ENCODE measurements at regions of chr22 and their contacts with region 1.

Region 1: DNA sequence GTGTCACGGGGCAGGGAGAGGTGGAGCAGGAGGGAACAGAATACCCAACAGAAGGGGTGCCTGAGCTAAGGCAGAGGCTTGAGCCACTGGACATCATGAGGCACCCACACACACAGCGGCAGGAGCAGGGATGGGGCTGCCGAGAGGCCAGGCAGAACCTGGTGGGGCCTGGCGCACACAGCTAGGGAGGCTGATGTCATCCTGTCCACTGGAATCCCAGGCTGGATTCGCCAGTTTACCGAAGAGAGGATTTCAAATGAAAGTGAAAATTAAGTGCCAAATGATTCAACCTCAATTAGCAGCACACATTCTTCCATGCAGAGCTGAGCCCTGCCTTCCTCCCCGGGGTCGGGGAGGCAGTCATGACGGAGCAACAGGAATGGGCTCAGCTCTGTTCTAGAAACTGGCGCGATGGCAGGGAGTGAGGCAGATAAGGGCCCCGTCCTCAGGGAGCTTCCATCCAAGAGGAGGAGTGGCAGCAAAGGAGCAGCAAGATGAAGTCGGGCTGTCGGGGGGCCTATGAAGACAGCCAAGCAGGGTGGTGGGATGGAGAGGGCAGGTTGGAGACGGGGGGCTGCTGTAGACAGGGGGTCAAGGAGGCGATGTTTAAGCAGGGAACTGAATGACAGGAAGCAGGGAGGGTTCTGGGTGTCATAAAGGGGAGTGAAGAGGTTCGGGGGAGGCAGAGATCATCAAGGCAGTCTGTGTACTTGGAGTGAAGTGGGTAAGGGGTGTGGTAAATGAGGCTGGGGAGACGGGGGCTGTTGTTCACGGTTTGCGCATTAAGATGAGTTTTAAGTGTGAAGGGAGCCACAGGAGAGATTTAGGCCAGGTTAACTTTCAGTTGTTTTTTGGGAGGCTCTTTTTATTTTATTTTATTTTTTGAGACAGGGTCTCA is 6.4 kb downstream of the RAC2 start:
- DNase-seq: peak in 6 of 9 experiments; percentile 23 to 70 (median 52)
- ATAC-seq: peak; percentile 20
- H3K4me3 ChIP-seq: peak overlapping the region; percentile 39 to 50
- H3K4me3 Mint-ChIP-seq: peak overlapping the region; percentile 82
- H3K27ac ChIP-seq: peak overlapping the region; percentile 59 to 81
- H3K27ac Mint-ChIP-seq: peak overlapping the region; percentile 100
- H3K4me1 ChIP-seq: peaks cover 97% of the 10 kb centered on the region
- H3K4me1 Mint-ChIP-seq: peaks cover 98% of the 10 kb centered on the region
- H3K27me3 ChIP-seq: no peaks in the 10 kb centered on the region
- H3K27me3 Mint-ChIP-seq: no peaks in the 10 kb centered on the region
- CTCF ChIP-seq: no peak

Region 2: DNA sequence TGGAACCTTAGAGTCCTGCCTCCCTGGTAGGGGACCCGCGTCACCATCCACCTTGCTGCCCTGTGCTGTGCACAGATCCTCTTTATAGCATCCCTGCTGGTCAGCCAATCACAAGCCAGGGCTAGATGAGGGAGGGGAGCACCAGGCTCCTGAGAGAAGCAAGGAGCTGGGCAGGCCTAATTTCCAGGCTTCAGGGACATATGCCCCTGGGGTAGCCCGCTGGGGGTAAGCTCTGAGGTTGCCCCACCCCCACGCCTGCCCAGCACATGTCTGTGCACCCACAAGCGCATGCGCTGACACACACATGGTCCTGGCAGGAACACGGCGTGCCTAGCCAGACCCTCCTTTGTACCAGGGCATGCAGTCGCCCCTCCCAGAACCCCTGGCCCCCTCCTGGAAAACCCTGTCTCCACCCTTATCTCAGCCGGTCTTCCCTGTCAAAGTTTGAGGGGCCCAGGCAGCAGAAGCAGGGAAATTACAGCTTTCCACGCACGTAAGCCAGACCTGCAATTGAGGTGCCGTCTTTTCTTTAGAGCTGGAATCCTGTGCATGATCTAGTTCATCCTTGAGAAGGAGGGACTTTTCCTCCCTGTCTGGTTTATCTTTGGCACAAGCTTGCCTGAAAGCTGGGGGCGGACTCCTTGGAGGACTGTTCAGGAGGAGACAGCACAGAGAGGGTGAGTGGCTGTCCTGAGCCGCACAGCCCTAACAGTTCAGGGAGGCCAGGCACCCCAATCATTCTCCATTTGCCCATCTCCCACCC is 27.4 kb before region 1 on chr22:
- CTCF ChIA-PET with region 1: interaction called, 7 read pairs
- POLR2A ChIA-PET with region 1: interaction called, 13 read pairs
- intact Hi-C with region 1: no loop called
- DNase-seq: peak in 3 of 9 experiments; percentile 3 to 48 (median 6)
- ATAC-seq: no peak
- H3K4me3 ChIP-seq: no peak overlapping the region
- H3K4me3 Mint-ChIP-seq: no peak overlapping the region
- H3K27ac ChIP-seq: no peak overlapping the region
- H3K27ac Mint-ChIP-seq: peak overlapping the region; percentile 83
- H3K4me1 ChIP-seq: peaks cover 62% of the 10 kb centered on the region
- H3K4me1 Mint-ChIP-seq: peaks cover 66% of the 10 kb centered on the region
- H3K27me3 ChIP-seq: no peaks in the 10 kb centered on the region
- H3K27me3 Mint-ChIP-seq: no peaks in the 10 kb centered on the region
- CTCF ChIP-seq: no peak

Measured in CD8-positive, alpha-beta T cell (primary cell).